H1 (cell line): ENCODE measurements at regions of chr12 and their contacts with region 1.

Region 1: GRCh38 chr12:82358200-82359114 is at the starts of genes CCDC59 and METTL25:
- DNase-seq: peak; percentile 95 to 98
- H3K4me3 ChIP-seq: peak within 1 kb of the TSS; percentile 80 to 100 (median 98)
- H3K27ac ChIP-seq: peak within 1 kb of the TSS; percentile 98
- H3K4me1 ChIP-seq: peaks cover 0 to 4% (median under 1%) of the 10 kb centered on the region in 4 experiments; a peak in 3 of 7 replicates
- H3K27me3 ChIP-seq: no peaks in the 10 kb centered on the region
- CTCF ChIP-seq: peak; percentile 66 to 95 (median 88)
- EP300 ChIP-seq: peak in 1 of 2 experiments; percentile 85; a peak in 1 of 3 replicates
- POLR2A ChIP-seq: peak; percentile 89 to 96
- RAD21 ChIP-seq: peak; percentile 44 to 47
- total RNA-seq, gene CCDC59: 54.0 and 59.1 TPM in 2 replicates
- total RNA-seq, gene METTL25: 8.3 and 10.8 TPM in 2 replicates

Region 2: GRCh38 chr12:81644503-81644902 is 714.0 kb before region 1 on chr12:
- CTCF ChIA-PET with region 1: interaction called, 10 read pairs
- POLR2A ChIA-PET with region 1: no interaction called
- DNase-seq: no peak
- H3K4me3 ChIP-seq: no peak overlapping the region
- H3K27ac ChIP-seq: no peak overlapping the region
- H3K4me1 ChIP-seq: no peaks in the 10 kb centered on the region
- H3K27me3 ChIP-seq: no peaks in the 10 kb centered on the region
- CTCF ChIP-seq: peak in 2 of 3 experiments; percentile 26 to 37; a peak in 2 of 4 replicates
- EP300 ChIP-seq: no peak
- POLR2A ChIP-seq: no peak
- RAD21 ChIP-seq: peak; percentile 70 to 79

Region 3: DNA sequence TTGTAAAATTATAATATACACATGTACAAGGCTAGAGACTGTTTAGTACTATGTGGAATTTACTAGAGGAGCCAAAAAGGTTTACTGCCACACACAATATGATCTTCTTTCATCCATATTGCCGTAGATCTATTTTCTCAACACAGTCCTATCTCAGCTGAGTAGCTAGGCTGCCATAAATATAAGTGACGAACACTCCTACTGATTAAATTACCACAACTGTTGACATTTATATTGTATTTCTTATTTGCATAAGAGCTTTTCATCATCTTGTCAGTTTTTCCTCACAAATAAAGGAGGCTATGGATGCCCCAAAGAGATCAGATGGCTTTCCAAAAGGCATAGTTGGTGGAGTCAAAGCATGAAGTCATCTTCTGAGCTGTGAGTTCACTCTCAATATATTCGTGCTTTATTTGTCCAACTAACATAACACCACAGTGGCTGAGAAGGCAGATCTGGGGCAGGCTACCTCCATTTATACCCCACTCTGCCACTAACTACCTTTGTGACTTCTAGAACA is 78.9 kb before region 1 on chr12:
- CTCF ChIA-PET with region 1: no interaction called
- POLR2A ChIA-PET with region 1: no interaction called
- DNase-seq: no peak
- H3K4me3 ChIP-seq: no peak overlapping the region
- H3K27ac ChIP-seq: no peak overlapping the region
- H3K4me1 ChIP-seq: no peaks in the 10 kb centered on the region
- H3K27me3 ChIP-seq: no peaks in the 10 kb centered on the region
- CTCF ChIP-seq: no peak
- EP300 ChIP-seq: no peak
- POLR2A ChIP-seq: no peak
- RAD21 ChIP-seq: no peak

Region 4: DNA sequence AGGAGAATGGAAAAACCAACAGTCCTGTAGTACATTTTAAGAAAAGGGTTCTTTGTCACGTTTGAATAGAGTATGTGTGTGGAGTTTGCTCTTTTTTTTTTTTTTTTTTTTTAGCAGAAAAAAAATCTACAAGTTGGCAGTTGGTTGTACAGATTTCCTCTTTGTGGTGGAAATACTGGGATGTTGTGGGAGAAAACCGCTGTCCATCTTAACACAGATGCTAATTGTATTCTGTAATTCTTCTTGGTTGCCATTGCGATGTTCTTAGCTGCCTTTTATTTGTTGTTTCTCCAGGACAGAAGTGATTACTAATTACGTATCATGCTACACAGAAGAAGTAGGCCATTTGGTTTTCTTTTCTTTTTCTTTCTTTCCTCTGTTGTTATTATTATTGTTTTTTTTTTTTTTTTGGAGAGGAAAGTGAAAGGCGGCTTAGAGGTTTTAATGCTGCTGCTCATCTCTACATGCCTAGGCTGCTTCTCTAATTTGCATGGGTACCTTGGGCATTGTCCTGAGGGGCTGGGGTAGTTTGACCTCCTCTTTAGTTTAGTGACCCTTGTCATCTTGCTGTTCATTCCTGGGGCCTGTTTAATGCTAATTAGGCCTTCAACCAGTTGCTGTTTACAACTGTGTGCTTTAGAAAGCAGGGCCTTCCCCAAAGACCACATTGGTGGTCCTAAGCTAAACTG is 423.0 kb after region 1 on chr12:
- CTCF ChIA-PET with region 1: no interaction called
- POLR2A ChIA-PET with region 1: no interaction called
- DNase-seq: no peak
- H3K4me3 ChIP-seq: peak overlapping the region in 1 of 4 experiments; percentile 23; a peak in 1 of 8 replicates
- H3K27ac ChIP-seq: no peak overlapping the region
- H3K4me1 ChIP-seq: peaks cover 0 to 20% (median 0%) of the 10 kb centered on the region in 4 experiments; a peak in 1 of 7 replicates
- H3K27me3 ChIP-seq: no peaks in the 10 kb centered on the region
- CTCF ChIP-seq: no peak
- EP300 ChIP-seq: no peak
- POLR2A ChIP-seq: no peak
- RAD21 ChIP-seq: peak in 1 of 2 experiments; percentile 6; a peak in 1 of 4 replicates